ENCODE measurements at regions of chr10 and their contacts with region 1.

Region 1: GRCh38 chr10:30583778-30584415 is 45.7 kb downstream of the LYZL2 start:
- DNase-seq: no peak
- H3K4me3 ChIP-seq: peak overlapping the region; percentile 36
- H3K4me3 Mint-ChIP-seq: peak overlapping the region in 6 of 7 donors; percentile 53 to 81 (median 78)
- H3K27ac ChIP-seq: peak overlapping the region; percentile 69
- H3K27ac Mint-ChIP-seq: peak overlapping the region in 4 of 8 donors; percentile 13 to 90 (median 42)
- H3K4me1 ChIP-seq: peaks cover 7% of the 10 kb centered on the region
- H3K4me1 Mint-ChIP-seq: peaks cover 4 to 15% (median 5%) of the 10 kb centered on the region in 3 donors
- H3K27me3 ChIP-seq: no peaks in the 10 kb centered on the region
- H3K27me3 Mint-ChIP-seq: peaks cover 5 to 7% of the 10 kb centered on the region in 2 donors

Region 2: DNA sequence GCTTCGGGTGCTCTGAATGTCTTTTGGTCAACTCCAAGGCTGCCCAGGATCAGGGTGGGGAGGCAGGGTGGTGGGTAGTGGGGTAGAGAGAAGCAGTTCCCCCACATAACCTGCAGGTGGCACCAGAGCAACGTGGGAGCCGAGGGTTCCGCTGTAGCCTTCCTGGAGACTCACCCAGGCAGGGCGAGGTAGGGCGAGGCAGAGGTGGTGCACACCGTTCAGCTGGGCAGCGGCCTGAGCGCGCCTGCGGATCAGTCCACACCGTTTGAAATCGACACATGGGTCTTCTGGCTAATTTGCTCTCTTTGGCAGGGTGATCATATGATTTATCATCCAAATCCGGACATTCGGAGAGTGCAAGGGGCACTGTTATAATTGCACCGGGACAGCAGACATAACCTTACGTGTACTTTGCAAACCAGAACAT is 191.3 kb before region 1 on chr10:
- CTCF ChIA-PET with region 1: interaction called, 153 read pairs
- POLR2A ChIA-PET with region 1: no interaction called
- DNase-seq: peak; percentile 56 to 79 (median 63)
- H3K4me3 ChIP-seq: no peak overlapping the region
- H3K4me3 Mint-ChIP-seq: peak overlapping the region in 1 of 7 donors; percentile 6
- H3K27ac ChIP-seq: no peak overlapping the region
- H3K27ac Mint-ChIP-seq: peak overlapping the region in 1 of 8 donors; percentile 40
- H3K4me1 ChIP-seq: peaks cover 4% of the 10 kb centered on the region
- H3K4me1 Mint-ChIP-seq: peaks cover 3 to 10% (median 4%) of the 10 kb centered on the region in 3 donors
- H3K27me3 ChIP-seq: no peaks in the 10 kb centered on the region
- H3K27me3 Mint-ChIP-seq: peaks cover 11 to 15% of the 10 kb centered on the region in 2 donors

Region 3: DNA sequence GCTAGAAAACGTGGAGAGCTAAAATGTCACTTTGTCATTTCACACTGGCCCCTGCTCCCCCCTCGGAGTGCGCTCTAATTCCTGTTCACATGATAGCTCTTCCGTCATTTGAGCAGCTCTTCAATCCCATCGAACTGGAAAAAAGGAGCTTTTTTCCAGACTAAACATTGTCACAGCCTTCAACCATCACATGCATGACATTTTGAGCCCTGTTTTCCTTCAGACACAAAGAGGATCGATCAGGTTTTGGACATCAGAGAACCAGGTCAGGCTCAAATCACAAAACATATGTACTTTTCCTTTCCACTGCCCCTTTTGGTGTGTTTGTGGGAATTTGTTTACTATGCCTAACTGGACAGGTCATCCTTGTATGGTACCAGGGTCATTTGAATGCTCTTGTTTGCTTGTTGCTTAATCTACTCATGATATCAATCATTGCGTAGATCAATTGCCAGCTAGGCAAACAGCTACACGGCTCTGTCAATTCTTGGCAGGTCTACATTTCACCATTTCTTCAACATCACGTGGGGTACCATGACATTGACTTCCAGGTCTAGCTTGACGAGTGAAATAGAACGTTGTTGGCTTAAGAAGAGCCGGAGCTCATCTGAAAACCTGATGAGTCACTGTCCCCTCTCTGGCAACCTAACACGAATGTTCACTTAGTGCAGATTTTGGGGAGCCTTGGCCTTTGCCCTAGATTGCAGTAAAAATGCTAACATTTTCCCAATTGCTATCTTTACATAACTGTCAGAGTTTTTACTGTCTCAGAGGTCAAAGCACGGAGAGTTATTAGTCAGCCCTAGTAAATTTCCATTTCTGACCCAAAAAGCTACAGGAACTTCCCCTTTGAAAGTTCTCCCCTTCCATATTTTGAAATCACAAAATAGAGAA is 41.6 kb before region 1 on chr10:
- CTCF ChIA-PET with region 1: interaction called, 12 read pairs
- POLR2A ChIA-PET with region 1: no interaction called
- DNase-seq: no peak
- H3K4me3 ChIP-seq: no peak overlapping the region
- H3K4me3 Mint-ChIP-seq: no peak overlapping the region
- H3K27ac ChIP-seq: peak overlapping the region; percentile 32
- H3K27ac Mint-ChIP-seq: peak overlapping the region in 1 of 8 donors; percentile 16
- H3K4me1 ChIP-seq: no peaks in the 10 kb centered on the region
- H3K4me1 Mint-ChIP-seq: no peaks in the 10 kb centered on the region
- H3K27me3 ChIP-seq: no peaks in the 10 kb centered on the region
- H3K27me3 Mint-ChIP-seq: peaks cover 0 to 4% of the 10 kb centered on the region in 2 donors